ENCODE measurements at regions of chr15 and their contacts with region 1.

Region 1: DNA sequence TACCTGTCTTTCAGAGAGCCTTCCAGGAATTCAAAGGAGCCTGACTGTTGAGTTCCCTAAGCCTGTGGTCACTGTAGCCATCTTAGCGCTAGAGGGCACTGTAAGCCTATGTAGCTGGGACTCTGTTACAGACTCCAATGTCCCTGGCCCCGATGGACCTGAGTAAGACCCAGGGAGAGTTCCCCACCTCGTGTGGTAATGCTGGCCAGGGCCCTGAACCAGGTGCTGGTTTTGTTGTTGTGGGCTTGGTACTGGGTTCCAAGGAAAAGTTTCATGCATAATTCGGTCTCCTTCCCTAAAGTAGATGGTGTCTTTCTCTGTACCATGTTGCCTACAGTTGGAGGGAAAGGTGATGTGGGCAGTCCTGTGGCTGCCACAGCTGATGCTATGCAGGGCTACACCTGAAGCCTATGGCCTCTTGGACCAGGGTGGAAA is 32.4 kb downstream of the CDAN1 start:
- DNase-seq: peak; percentile 64
- ATAC-seq: peak; percentile 94 to 95

Region 2: DNA sequence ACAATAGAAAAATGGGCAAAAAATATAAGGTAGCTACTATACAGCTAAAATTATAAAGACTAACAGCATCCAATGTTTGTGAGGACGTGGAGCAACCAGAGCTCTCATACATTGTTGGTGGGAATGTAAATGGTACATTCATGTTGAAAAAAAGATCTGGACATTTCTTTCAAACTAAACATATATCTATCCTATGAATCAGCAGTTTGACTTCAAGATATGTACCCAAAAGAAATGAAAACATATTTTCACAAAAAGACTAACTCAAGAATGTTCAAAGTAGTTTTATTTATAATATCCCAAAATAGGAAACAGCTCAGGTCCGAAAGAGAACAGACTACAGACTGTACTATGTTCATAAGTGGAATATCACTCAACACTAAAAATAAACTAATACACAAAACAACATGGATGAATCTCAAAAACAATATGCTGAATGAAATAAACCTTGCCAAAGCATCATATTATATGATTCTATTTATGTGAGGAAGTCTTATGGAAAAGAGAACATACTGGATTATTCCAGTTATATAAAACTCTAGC is 224.9 kb after region 1 on chr15:
- intact Hi-C with region 1: loop called (anchors 5 kb)
- DNase-seq: no peak
- ATAC-seq: no peak